Posterior vena cava (tissue), 2 donors: ENCODE measurements at regions of chr14 and their contacts with region 1.

Region 1: DNA sequence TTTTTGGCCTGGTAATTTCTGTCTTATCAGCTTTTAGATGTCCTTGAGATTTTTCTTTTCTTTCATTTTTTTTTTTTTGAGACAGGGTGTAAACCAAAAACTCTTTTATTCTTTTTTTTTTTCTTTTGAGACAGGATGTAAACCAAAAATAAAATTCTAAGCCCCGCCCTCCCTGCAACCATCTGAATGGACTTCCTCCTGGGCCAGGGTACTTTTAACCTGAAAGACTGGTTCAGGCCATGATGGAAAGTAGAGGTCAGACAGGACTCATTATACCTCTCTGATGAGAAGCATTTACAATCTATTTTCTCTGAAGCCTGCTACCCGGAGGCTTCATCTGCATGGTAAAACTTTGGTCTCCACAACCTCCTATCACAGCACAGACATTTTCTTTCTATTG is 33.5 kb upstream of the TCL1B start:
- DNase-seq: no peak

Region 2: GRCh38 chr14:95623195-95623594 is 29.5 kb before region 1 on chr14:
- intact Hi-C with region 1: loop called in 1 of 2 experiments (anchors 1 kb)
- DNase-seq: no peak

Region 3: GRCh38 chr14:96038920-96039632 is 386.4 kb after region 1 on chr14 and contains the start of gene C14orf132:
- intact Hi-C with region 1: no loop called
- DNase-seq: peak; percentile 90
- total RNA-seq, gene C14orf132: 70.8 to 122 TPM